ENCODE measurements at regions of chr14 and their contacts with region 1.

Region 1: GRCh38 chr14:92625213-92625612 is 111.6 kb downstream of the RIN3 start:
- DNase-seq: no peak

Region 2: GRCh38 chr14:92659765-92660561 is 34.8 kb after region 1 on chr14:
- intact Hi-C with region 1: loop called in 1 of 2 experiments (anchors 1 kb)
- DNase-seq: peak; percentile 60